A673 (cell line): ENCODE measurements at regions of chr11 and their contacts with region 1.

Region 1: GRCh38 chr11:76030968-76031590 is 175.2 kb downstream of the WNT11 start:
- DNase-seq: peak; percentile 33
- H3K4me3 ChIP-seq: no peak overlapping the region
- H3K27ac ChIP-seq: no peak overlapping the region
- H3K4me1 ChIP-seq: peaks cover 7% of the 10 kb centered on the region
- H3K27me3 ChIP-seq: no peaks in the 10 kb centered on the region
- CTCF ChIP-seq: no peak

Region 2: GRCh38 chr11:75946531-75947530 is 84.2 kb before region 1 on chr11:
- CTCF ChIA-PET with region 1: no interaction called
- POLR2A ChIA-PET with region 1: no interaction called
- intact Hi-C with region 1: no loop called
- DNase-seq: peak; percentile 80
- H3K4me3 ChIP-seq: no peak overlapping the region
- H3K27ac ChIP-seq: no peak overlapping the region
- H3K4me1 ChIP-seq: peaks cover 22% of the 10 kb centered on the region
- H3K27me3 ChIP-seq: no peaks in the 10 kb centered on the region
- CTCF ChIP-seq: no peak

Region 3: DNA sequence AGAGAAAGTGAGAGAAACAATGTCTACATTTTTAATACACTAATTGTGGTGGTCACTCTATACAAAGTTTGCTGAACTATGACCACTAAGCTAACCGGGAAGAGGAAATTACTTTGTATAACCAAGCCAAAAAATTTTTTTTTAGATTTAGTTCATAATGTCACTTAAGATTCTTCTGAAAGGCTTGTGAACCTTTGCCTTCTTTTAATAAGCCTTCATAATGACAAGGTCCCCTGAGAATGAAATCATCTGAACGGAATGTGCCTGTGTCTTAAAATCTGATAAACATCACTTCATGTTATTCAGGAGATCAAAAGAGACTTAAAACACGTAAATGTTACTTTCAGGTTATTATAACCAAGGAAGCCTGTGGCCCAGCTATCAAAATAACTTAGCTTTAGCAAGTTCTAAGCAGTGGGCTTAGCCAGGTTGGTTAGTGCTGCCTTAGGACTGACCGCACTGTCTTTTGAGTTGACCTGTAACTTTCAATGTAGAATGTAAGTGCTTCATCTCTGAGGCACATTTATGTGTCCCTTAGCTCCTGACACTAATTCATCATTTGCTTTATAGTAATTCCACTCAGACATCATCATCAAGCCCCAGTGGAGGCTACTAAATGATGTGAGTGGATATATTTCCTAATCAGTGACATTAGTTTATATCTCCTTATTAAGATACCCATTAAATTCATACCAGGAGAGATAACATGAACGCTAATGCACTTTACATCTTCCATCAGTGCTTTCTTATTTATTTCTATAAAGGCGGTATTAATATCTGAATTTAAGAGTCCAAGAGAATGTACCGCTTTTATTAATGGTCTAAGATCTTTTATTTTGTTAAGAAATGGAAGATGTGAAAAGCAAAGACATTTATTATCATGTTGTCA is 52.7 kb after region 1 on chr11:
- CTCF ChIA-PET with region 1: no interaction called
- POLR2A ChIA-PET with region 1: interaction called, 19 read pairs
- intact Hi-C with region 1: no loop called
- DNase-seq: peak; percentile 37
- H3K4me3 ChIP-seq: no peak overlapping the region
- H3K27ac ChIP-seq: no peak overlapping the region
- H3K4me1 ChIP-seq: no peaks in the 10 kb centered on the region
- H3K27me3 ChIP-seq: no peaks in the 10 kb centered on the region
- CTCF ChIP-seq: no peak